ENCODE measurements at regions of chr5 and their contacts with region 1.

Region 1: DNA sequence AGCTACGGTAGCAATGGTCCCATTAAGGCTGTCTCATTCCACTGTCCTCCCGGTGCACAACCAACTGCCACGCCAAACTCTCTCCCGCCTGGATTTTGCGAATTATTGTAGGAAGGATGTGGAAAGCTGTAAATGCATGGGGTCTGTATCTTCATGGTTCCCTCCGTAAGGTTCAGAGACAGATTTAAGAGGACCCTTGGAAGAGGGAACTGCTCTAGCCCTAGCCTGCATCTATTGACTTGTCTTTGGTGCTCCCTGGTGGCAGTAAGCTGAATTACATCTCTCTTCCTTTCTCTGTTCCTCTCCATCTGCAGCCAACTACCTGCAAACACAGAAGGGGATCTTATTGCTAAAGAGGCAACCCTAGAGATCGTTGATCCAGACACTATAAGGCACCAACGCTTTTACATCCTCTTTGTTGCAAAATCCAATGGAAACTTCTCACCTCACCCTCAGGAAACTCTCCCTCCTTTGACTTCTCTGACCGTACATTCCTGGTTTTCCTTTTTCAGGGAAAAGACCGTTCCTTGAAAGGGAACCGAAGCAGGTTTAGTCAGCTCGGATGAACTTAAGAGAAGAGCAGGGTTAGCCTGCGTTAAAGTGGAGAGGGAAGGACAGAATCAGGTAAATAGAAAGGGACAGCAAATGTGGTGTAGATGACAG is 11.9 kb downstream of the CAPSL start:
- DNase-seq: no peak
- H3K4me3 ChIP-seq: peak overlapping the region in 1 of 3 donors; percentile 23
- H3K27ac ChIP-seq: no peak overlapping the region
- H3K4me1 ChIP-seq: no peaks in the 10 kb centered on the region
- H3K27me3 ChIP-seq: peaks cover 0 to 40% of the 10 kb centered on the region in 2 donors
- CTCF ChIP-seq: peak; percentile 75 to 87 (median 78)
- POLR2A ChIP-seq: no peak

Region 2: GRCh38 chr5:34905564-34905963 is 1021.0 kb before region 1 on chr5:
- intact Hi-C with region 1: loop called (anchors 5 kb)
- DNase-seq: no peak
- H3K4me3 ChIP-seq: no peak overlapping the region
- H3K27ac ChIP-seq: no peak overlapping the region
- H3K4me1 ChIP-seq: no peaks in the 10 kb centered on the region
- H3K27me3 ChIP-seq: no peaks in the 10 kb centered on the region
- CTCF ChIP-seq: no peak
- POLR2A ChIP-seq: no peak

Region 3: DNA sequence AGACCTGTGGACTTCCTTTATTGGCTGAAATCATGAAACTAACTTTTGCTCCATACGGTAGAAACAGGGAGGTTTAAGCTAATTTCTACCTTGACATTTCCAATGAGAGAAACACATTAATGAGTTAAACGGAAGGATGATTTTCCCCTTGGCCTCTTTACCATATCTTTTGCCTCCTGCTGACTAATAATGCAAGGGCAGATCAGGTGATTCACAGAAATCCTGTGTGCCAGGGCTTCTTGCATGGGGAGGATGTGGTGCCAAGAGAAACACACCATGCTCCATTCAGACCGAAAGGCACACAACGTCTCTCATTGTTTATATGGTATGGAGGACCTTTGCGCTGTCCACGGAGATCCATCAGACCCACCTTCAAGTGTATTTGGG is 678.9 kb before region 1 on chr5:
- intact Hi-C with region 1: no loop called
- DNase-seq: peak in 1 of 2 donors; percentile 47
- H3K4me3 ChIP-seq: no peak overlapping the region
- H3K27ac ChIP-seq: peak overlapping the region; percentile 62 to 79
- H3K4me1 ChIP-seq: peaks cover 0 to 4% of the 10 kb centered on the region in 2 donors
- H3K27me3 ChIP-seq: no peaks in the 10 kb centered on the region
- CTCF ChIP-seq: no peak
- POLR2A ChIP-seq: no peak

Region 4: GRCh38 chr5:35777358-35778087 is 149.0 kb before region 1 on chr5:
- intact Hi-C with region 1: loop called (anchors 10 kb)
- DNase-seq: peak; percentile 19 to 53
- H3K4me3 ChIP-seq: no peak overlapping the region
- H3K27ac ChIP-seq: no peak overlapping the region
- H3K4me1 ChIP-seq: no peaks in the 10 kb centered on the region
- H3K27me3 ChIP-seq: no peaks in the 10 kb centered on the region
- CTCF ChIP-seq: peak in 1 of 3 donors; percentile 36
- POLR2A ChIP-seq: no peak

Region 5: GRCh38 chr5:35884115-35884788 is 42.3 kb before region 1 on chr5:
- intact Hi-C with region 1: no loop called
- DNase-seq: no peak
- H3K4me3 ChIP-seq: no peak overlapping the region
- H3K27ac ChIP-seq: no peak overlapping the region
- H3K4me1 ChIP-seq: no peaks in the 10 kb centered on the region
- H3K27me3 ChIP-seq: no peaks in the 10 kb centered on the region
- CTCF ChIP-seq: no peak
- POLR2A ChIP-seq: no peak

Measured in breast epithelium (tissue), 4 donors.